Activated CD4-positive, alpha-beta memory T cell treated with anti-CD3 and anti-CD28 coated beads for 36 hours (primary cell): ENCODE measurements at regions of chr7 and their contacts with region 1.

Region 1: GRCh38 chr7:143263266-143264195 is at the start of gene GSTK1:
- DNase-seq: peak; percentile 90
- H3K4me3 Mint-ChIP-seq: peak within 1 kb of the TSS; percentile 91
- H3K27ac Mint-ChIP-seq: peak within 1 kb of the TSS; percentile 92
- H3K4me1 Mint-ChIP-seq: peaks cover 60% of the 10 kb centered on the region
- H3K27me3 Mint-ChIP-seq: no peaks in the 10 kb centered on the region
- total RNA-seq, gene GSTK1: 218 to 224 TPM

Region 2: GRCh38 chr7:142992464-142992863 is 271.1 kb before region 1 on chr7:
- CTCF ChIA-PET with region 1: no interaction called
- POLR2A ChIA-PET with region 1: no interaction called
- intact Hi-C with region 1: no loop called
- DNase-seq: no peak
- H3K4me3 Mint-ChIP-seq: no peak overlapping the region
- H3K27ac Mint-ChIP-seq: no peak overlapping the region
- H3K4me1 Mint-ChIP-seq: no peaks in the 10 kb centered on the region
- H3K27me3 Mint-ChIP-seq: peaks cover 6% of the 10 kb centered on the region

Region 3: GRCh38 chr7:143069912-143070500 is 193.5 kb before region 1 on chr7:
- CTCF ChIA-PET with region 1: no interaction called
- POLR2A ChIA-PET with region 1: no interaction called
- intact Hi-C with region 1: no loop called
- DNase-seq: no peak
- H3K4me3 Mint-ChIP-seq: no peak overlapping the region
- H3K27ac Mint-ChIP-seq: no peak overlapping the region
- H3K4me1 Mint-ChIP-seq: no peaks in the 10 kb centered on the region
- H3K27me3 Mint-ChIP-seq: peaks cover 7% of the 10 kb centered on the region

Region 4: DNA sequence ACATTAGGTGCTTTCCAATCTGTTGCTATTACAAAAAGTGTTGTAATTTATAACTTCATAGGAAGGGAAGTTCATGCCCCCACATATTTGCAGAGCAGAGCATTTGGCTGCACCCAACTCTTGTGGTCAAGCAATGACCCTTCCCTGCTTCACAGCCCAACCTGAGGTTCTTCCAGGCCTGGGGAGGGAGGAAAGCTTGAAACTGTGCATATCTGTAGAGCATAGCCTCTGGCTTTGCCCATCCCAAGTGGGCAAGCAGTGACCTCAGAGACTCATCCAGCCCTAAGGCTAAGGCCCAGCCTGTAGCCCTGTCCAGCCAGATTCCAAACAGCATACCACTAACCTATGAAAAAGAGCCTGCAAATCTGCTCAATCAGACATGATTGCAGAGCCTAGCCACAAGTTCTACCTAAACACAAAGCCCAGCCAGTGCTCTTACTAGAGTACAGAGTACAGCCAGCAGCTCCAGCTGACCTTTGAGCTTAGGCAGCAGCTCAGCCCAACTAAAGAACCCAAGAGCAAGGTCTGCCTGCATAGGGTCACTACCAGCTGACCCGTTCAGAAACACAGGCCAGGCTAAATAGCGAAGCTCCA is 14.7 kb before region 1 on chr7:
- CTCF ChIA-PET with region 1: interaction called, 9 read pairs
- POLR2A ChIA-PET with region 1: interaction called, 10 read pairs
- intact Hi-C with region 1: loop called (anchors 1 kb)
- DNase-seq: no peak
- H3K4me3 Mint-ChIP-seq: no peak overlapping the region
- H3K27ac Mint-ChIP-seq: no peak overlapping the region
- H3K4me1 Mint-ChIP-seq: peaks cover 77% of the 10 kb centered on the region
- H3K27me3 Mint-ChIP-seq: no peaks in the 10 kb centered on the region

Region 5: GRCh38 chr7:143279186-143280098 is 15.9 kb after region 1 on chr7:
- CTCF ChIA-PET with region 1: interaction called, 5 read pairs
- POLR2A ChIA-PET with region 1: interaction called, 27 read pairs
- intact Hi-C with region 1: loop called (anchors 1 kb)
- DNase-seq: no peak
- H3K4me3 Mint-ChIP-seq: peak overlapping the region; percentile 51
- H3K27ac Mint-ChIP-seq: peak overlapping the region; percentile 87
- H3K4me1 Mint-ChIP-seq: peaks cover 40% of the 10 kb centered on the region
- H3K27me3 Mint-ChIP-seq: no peaks in the 10 kb centered on the region

Region 6: GRCh38 chr7:143287935-143288826 is 24.6 kb after region 1 on chr7 and contains the start of gene CASP2:
- CTCF ChIA-PET with region 1: interaction called, 6 read pairs
- POLR2A ChIA-PET with region 1: interaction called, 7 read pairs
- intact Hi-C with region 1: loop called (anchors 1 kb)
- DNase-seq: peak; percentile 99
- H3K4me3 Mint-ChIP-seq: peak within 1 kb of the TSS; percentile 93
- H3K27ac Mint-ChIP-seq: peak within 1 kb of the TSS; percentile 97
- H3K4me1 Mint-ChIP-seq: peaks cover 44% of the 10 kb centered on the region
- H3K27me3 Mint-ChIP-seq: no peaks in the 10 kb centered on the region
- total RNA-seq, gene CASP2: 117 to 129 TPM

Region 7: GRCh38 chr7:143299840-143300239 is 36.3 kb after region 1 on chr7:
- CTCF ChIA-PET with region 1: interaction called, 11 read pairs
- POLR2A ChIA-PET with region 1: interaction called, 6 read pairs
- intact Hi-C with region 1: loop called (anchors 5 kb)
- DNase-seq: peak; percentile 68
- H3K4me3 Mint-ChIP-seq: no peak overlapping the region
- H3K27ac Mint-ChIP-seq: no peak overlapping the region
- H3K4me1 Mint-ChIP-seq: peaks cover 50% of the 10 kb centered on the region
- H3K27me3 Mint-ChIP-seq: no peaks in the 10 kb centered on the region

Region 8: DNA sequence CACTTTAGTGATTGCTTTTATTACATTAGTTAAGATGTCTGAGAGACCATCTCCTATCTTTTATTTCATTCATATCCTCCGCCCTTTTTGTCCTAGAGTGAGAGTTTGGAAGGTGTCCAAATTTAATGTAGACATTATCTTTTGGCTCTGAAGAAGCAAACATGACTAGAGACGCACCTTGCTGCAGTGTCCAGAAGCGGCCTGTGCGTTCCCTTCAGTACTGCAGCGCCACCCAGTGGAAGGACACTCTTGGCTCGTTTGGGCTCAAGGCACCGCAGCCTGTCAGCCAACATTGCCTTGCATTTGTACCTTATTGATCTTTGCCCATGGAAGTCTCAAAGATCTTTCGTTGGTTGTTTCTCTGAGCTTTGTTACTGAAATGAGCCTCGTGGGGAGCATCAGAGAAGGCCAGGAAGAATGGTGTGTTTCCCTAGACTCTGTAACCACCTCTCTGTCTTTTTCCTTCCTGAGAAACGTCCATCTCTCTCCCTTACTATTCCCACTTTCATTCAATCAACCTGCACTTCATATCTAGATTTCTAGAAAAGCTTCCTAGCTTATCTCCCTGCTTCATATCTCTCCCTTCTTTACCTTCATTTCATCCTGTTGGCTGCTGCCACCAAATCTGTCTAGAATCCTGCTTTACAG is 42.0 kb after region 1 on chr7:
- CTCF ChIA-PET with region 1: interaction called, 6 read pairs
- POLR2A ChIA-PET with region 1: interaction called, 3 read pairs
- intact Hi-C with region 1: loop called (anchors 5 kb)
- DNase-seq: peak; percentile 82
- H3K4me3 Mint-ChIP-seq: no peak overlapping the region
- H3K27ac Mint-ChIP-seq: peak overlapping the region; percentile 64
- H3K4me1 Mint-ChIP-seq: peaks cover 49% of the 10 kb centered on the region
- H3K27me3 Mint-ChIP-seq: no peaks in the 10 kb centered on the region